WTC11 (cell line): ENCODE measurements at regions of chr9 and their contacts with region 1.

Region 1: DNA sequence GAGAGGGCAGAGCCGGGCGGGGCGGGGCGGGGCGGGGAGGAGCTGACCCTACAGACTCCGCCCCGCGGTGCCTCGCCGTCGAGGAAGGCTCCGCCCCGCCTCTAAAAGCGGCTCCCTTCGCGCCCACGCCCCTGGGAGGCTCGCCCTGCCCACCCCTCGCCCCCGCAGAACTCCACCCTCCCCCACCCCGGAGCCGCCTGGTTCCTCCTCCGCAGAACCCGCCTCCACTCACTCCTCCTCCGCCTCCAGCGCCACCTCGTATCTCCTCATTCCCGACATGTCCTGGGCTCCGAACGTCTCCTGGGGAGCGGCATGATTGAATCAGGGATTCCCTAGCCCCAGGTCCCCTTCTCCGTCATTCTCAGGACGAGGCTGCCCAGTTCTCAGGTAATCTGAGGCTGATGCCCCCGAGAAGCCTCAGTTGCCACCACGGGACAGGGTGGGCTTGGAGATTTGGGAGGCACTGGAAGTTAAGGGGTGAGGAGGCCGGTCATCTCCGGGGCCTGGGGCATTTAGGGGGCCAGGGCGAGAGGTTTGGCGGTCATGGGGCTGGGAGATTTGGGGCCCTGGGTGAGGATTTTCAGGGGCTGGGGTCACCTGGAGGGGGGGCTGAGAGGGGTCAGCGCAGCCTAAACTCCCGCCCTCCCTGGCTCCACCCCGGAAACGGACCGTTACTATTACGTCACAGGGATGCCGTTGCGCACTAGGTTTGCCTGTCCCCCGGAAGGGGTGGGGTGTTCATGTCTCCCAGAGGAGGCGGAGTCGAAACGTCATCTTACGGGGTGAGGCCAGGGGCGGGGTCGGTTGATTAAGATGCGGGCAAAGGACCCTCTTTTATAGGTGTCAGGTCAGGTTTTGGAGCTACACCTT is 3.2 kb upstream of the CCL27 start:
- DNase-seq: peak; percentile 94
- ATAC-seq: peak; percentile 82
- H3K4me3 Mint-ChIP-seq: peak overlapping the region; percentile 94
- H3K27ac Mint-ChIP-seq: peak overlapping the region; percentile 97
- H3K4me1 Mint-ChIP-seq: peaks cover 9% of the 10 kb centered on the region
- H3K27me3 Mint-ChIP-seq: peaks cover 13% of the 10 kb centered on the region
- CTCF ChIP-seq: no peak

Region 2: GRCh38 chr9:34646211-34647083 is 19.2 kb before region 1 on chr9 and contains the start of gene GALT:
- CTCF ChIA-PET with region 1: interaction called, 56 read pairs
- POLR2A ChIA-PET with region 1: interaction called, 11 read pairs
- DNase-seq: peak; percentile 95
- ATAC-seq: peak; percentile 87
- H3K4me3 Mint-ChIP-seq: peak within 1 kb of the TSS; percentile 85
- H3K27ac Mint-ChIP-seq: peak within 1 kb of the TSS; percentile 76
- H3K4me1 Mint-ChIP-seq: peaks cover 34% of the 10 kb centered on the region
- H3K27me3 Mint-ChIP-seq: no peaks in the 10 kb centered on the region
- CTCF ChIP-seq: no peak
- total RNA-seq, gene GALT: 35.9 to 39.7 TPM (median 37.6 TPM) in 3 replicates

Region 3: DNA sequence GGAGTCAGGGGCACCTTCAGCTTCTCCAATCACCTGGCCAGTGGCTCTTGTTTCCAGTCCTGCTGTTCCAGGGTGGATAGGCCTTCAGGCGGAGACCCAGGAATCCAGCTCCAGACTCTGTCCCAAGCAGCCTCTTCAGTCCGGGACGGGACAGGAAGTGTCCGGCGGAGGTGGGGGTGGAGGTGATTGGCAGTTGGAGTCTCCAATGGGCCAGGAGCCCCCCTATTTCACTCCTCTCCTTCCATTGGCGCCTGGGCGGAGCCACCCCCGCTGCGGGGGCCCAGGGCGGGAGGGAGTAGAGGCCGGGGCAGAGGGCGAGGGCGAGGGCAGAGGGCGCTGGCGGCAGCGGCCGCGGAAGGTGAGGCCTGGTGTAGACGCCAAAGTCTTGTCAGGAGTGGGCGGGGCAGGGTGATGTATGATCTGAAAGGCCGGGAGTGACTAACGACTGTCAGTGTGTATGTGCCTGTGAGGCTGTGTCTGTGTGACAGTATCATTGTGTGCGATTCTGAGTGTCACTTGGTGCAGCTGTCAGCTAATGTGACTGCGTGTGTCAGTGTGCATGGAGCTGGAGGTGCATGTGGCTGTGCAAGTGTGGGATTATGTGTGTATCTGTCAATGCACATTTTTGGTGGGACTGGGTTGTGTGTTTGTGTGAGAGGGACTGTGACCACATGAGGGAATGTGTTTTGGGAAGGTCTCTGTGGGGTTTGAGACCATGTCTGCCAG is 13.6 kb before region 1 on chr9 and contains the start of gene IL11RA:
- CTCF ChIA-PET with region 1: interaction called, 56 read pairs
- POLR2A ChIA-PET with region 1: interaction called, 11 read pairs
- DNase-seq: peak; percentile 94
- ATAC-seq: peak; percentile 94
- H3K4me3 Mint-ChIP-seq: peak within 1 kb of the TSS; percentile 81
- H3K27ac Mint-ChIP-seq: peak within 1 kb of the TSS; percentile 94
- H3K4me1 Mint-ChIP-seq: peaks cover 37% of the 10 kb centered on the region
- H3K27me3 Mint-ChIP-seq: no peaks in the 10 kb centered on the region
- CTCF ChIP-seq: no peak
- total RNA-seq, gene IL11RA: 7.2 to 8.6 TPM (median 7.6 TPM) in 3 replicates